Heart left ventricle (tissue), 16 donors: ENCODE measurements at regions of chr6 and their contacts with region 1.

Region 1: GRCh38 chr6:138912308-138912707 is 75.7 kb downstream of the REPS1 start:
- DNase-seq: no peak
- ATAC-seq: no peak
- H3K4me3 ChIP-seq: no peak overlapping the region
- H3K27ac ChIP-seq: no peak overlapping the region
- H3K4me1 ChIP-seq: peaks cover 0 to 3% (median 0%) of the 10 kb centered on the region in 12 donors
- H3K27me3 ChIP-seq: no peaks in the 10 kb centered on the region
- CTCF ChIP-seq: no peak
- POLR2A ChIP-seq: no peak

Region 2: DNA sequence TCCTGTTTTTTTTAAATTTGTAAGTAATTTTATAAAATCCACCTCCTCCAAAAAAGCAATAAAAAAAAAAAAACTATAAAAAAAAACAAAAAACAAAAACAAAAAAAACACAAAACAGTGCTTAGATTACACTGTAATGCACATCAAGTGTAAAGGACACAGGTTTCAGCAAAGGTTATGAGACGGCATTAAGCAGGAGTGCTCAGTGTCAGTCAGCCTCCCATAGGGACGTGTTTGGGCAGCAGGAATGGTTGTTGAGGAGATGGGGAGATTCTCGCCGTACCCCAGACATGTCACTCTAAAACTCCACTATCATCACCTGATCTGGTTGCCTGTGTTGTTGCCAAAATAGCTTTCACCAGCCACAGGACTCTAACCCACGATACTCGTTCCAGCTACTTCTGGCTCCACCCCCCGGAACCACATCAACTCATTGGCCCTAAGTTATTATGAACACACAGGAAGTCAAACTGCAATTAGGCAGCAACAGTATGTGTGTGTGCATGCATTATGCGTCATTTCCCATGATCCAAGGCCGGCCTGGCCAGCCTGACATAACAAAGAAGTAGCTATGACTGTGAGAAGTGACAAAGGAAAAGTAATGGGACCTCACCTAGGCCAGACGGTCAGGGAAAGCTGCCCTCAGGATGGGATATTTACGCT is 87.7 kb before region 1 on chr6:
- intact Hi-C with region 1: loop called in 3 of 10 experiments (anchors 10 kb)
- DNase-seq: no peak
- ATAC-seq: peak in 3 of 4 donors; percentile 13 to 51 (median 16)
- H3K4me3 ChIP-seq: no peak overlapping the region
- H3K27ac ChIP-seq: no peak overlapping the region
- H3K4me1 ChIP-seq: peaks cover 0 to 4% (median 0%) of the 10 kb centered on the region in 12 donors
- H3K27me3 ChIP-seq: no peaks in the 10 kb centered on the region
- CTCF ChIP-seq: no peak
- POLR2A ChIP-seq: no peak

Region 3: GRCh38 chr6:138856654-138857053 is 55.7 kb before region 1 on chr6:
- intact Hi-C with region 1: no loop called
- DNase-seq: no peak
- ATAC-seq: no peak
- H3K4me3 ChIP-seq: no peak overlapping the region
- H3K27ac ChIP-seq: no peak overlapping the region
- H3K4me1 ChIP-seq: no peaks in the 10 kb centered on the region
- H3K27me3 ChIP-seq: no peaks in the 10 kb centered on the region
- CTCF ChIP-seq: no peak
- POLR2A ChIP-seq: no peak

Region 4: GRCh38 chr6:138931660-138932059 is 19.4 kb after region 1 on chr6:
- intact Hi-C with region 1: loop called in 1 of 10 experiments (anchors 2 kb)
- DNase-seq: no peak
- ATAC-seq: no peak
- H3K4me3 ChIP-seq: no peak overlapping the region
- H3K27ac ChIP-seq: no peak overlapping the region
- H3K4me1 ChIP-seq: peaks cover 0 to 5% (median 0%) of the 10 kb centered on the region in 12 donors
- H3K27me3 ChIP-seq: no peaks in the 10 kb centered on the region
- CTCF ChIP-seq: no peak
- POLR2A ChIP-seq: no peak

Region 5: DNA sequence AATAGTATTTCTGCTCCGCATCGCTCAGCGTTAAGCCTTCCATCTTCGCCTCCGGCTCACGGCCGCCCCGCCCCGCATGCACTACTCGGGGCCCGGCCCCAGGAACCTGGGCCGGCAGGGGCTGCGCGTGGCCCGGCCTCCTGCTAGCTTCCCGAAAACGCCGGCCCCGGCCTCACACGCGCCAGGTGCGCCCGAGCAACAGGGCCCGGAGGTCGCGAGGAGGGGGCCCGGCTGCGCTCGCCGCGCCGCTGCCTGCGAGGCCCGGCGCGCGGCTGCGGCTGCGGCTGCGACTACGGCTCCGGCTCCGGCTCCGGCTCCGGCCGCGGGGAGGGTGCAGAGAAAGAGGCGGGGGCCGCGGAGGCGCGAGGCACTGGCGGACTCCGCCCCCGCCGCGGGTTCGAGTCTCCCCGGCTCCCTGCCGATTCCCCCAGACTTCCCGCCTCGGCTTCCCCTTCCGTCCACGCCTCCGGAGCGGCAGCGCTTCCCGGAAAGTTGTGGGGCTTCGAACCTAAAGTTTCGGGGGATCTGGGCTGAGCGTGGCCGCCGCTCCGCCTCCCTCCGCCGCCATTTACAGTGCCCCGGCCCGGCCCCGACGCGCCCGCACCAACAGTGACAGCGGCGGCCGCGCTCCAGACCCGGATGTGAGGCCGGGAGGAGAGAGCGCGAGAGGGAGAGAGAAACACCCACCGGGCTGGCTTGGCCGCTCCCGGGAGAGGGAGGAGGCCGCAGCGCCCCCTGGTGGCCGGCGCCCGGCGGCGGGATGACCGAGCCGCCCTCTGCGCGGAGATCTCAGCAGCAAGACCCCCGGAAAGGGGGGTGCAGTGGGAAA is 75.5 kb after region 1 on chr6 and contains the start of gene REPS1:
- intact Hi-C with region 1: loop called in 3 of 10 experiments (anchors 10 kb)
- DNase-seq: peak; percentile 92 to 95 (median 94)
- ATAC-seq: peak; percentile 95 to 98 (median 98)
- H3K4me3 ChIP-seq: peak within 1 kb of the TSS; percentile 80 to 99 (median 90)
- H3K27ac ChIP-seq: peak within 1 kb of the TSS; percentile 80 to 96 (median 92)
- H3K4me1 ChIP-seq: peaks cover 0 to 42% (median 23%) of the 10 kb centered on the region in 12 donors
- H3K27me3 ChIP-seq: no peaks in the 10 kb centered on the region
- CTCF ChIP-seq: peak; percentile 98 to 100 (median 99)
- POLR2A ChIP-seq: peak in 1 of 2 donors; percentile 62
- total RNA-seq, gene REPS1: 35.2 to 48.2 (median 38.3) TPM